ENCODE measurements at regions of chr9 and their contacts with region 1.

Region 1: GRCh38 chr9:136944519-136945279 is at the starts of genes C8G and FBXW5:
- DNase-seq: peak; percentile 72
- ATAC-seq: peak; percentile 78
- H3K4me3 ChIP-seq: peak within 1 kb of the TSS; percentile 98
- H3K27ac ChIP-seq: peak within 1 kb of the TSS; percentile 91
- H3K4me1 ChIP-seq: peaks cover 4% of the 10 kb centered on the region
- H3K27me3 ChIP-seq: no peaks in the 10 kb centered on the region
- CTCF ChIP-seq: peak; percentile 95 to 98 (median 98); a peak in 5 of 6 replicates
- EP300 ChIP-seq: 0 out of 4 replicates have a peak, but pooled peaks of 1 of the 2 experiments have one; percentile 35
- POLR2A ChIP-seq: no peak
- RAD21 ChIP-seq: peak; percentile 35; the same call in 1 of the 2 replicates
- polyA plus RNA-seq, gene C8G: not detected
- polyA plus RNA-seq, gene FBXW5: 0.21 to 1.4 TPM

Region 2: DNA sequence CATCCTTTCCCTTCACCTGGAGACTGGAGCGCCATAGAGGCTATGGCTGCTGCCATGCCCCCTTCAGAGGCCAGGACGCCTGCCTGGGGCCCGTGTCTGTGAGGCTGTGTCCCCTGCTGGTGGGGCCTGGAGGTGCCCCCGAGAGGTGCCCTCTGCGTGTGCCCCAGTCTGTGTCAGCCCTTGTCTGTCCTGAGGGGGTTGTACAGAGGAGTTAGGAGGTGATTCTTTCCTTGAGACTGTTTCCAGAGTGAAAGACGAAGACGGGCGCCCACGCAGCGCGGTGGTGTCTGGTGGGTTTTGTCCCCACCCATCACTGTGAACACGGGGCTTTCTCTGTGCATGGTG is 33.8 kb before region 1 on chr9:
- CTCF ChIA-PET with region 1: no interaction called
- POLR2A ChIA-PET with region 1: no interaction called
- RAD21 ChIA-PET with region 1: no interaction called
- SMC1A ChIA-PET with region 1: no interaction called
- in situ Hi-C with region 1: no loop called
- intact Hi-C with region 1: no loop called
- DNase-seq: no peak
- ATAC-seq: peak; percentile 68
- H3K4me3 ChIP-seq: no peak overlapping the region
- H3K27ac ChIP-seq: no peak overlapping the region
- H3K4me1 ChIP-seq: no peaks in the 10 kb centered on the region
- H3K27me3 ChIP-seq: no peaks in the 10 kb centered on the region
- CTCF ChIP-seq: peak in 2 of 3 experiments; percentile 6 to 14; a peak in 2 of 6 replicates
- EP300 ChIP-seq: no peak
- POLR2A ChIP-seq: no peak
- RAD21 ChIP-seq: no peak

Region 3: DNA sequence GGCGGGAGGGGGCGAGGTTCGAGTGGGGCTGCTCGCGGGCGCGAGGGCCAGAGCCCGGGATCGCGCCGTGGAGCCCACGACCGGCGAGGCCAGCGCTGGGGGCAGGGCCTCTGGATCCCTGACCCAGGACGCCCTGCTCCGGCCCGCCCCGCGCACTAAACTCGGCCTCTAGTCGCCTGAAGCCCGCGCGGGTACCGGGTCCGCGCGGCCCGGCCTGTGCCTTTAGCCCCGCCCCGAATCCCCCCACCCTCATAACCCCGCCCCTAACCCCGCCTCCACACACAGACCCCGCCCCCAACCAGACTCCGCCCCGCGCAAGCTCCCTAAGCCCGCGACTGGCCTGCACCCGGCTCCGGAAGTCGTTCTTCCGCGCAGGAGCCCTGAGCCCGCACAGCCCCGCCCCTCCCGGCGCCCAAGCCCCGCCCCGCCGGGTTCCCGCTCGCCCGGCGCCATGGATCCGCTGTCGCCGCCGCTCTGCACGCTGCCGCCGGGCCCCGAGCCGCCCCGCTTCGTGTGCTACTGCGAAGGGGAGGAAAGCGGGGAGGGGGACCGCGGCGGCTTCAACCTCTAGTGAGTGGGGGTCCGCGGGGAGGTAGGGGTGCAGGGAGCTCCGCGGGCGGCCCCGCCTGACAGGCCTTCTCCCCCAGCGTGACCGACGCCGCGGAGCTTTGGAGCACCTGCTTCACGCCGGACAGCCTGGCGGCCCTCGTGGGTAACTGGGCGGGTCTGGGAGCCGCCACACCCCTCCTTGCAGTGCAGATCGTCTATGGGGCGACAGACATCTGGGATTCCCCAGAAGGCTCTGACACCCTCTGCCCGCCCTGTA is 47.5 kb after region 1 on chr9 and contains the start of gene PAXX:
- CTCF ChIA-PET with region 1: interaction called, 9 read pairs
- POLR2A ChIA-PET with region 1: interaction called, 3 read pairs
- RAD21 ChIA-PET with region 1: interaction called, 8 read pairs
- SMC1A ChIA-PET with region 1: interaction called, 4 read pairs
- in situ Hi-C with region 1: no loop called
- intact Hi-C with region 1: loop called (anchors 1 kb)
- DNase-seq: no peak
- ATAC-seq: peak; percentile 94
- H3K4me3 ChIP-seq: peak within 1 kb of the TSS; percentile 73
- H3K27ac ChIP-seq: peak within 1 kb of the TSS; percentile 63
- H3K4me1 ChIP-seq: peaks cover 20% of the 10 kb centered on the region
- H3K27me3 ChIP-seq: peaks cover 2 to 4% of the 10 kb centered on the region in 2 experiments; a peak in 3 of 4 replicates
- CTCF ChIP-seq: no peak
- EP300 ChIP-seq: no peak
- POLR2A ChIP-seq: peak; percentile 67
- RAD21 ChIP-seq: no peak
- polyA plus RNA-seq, gene PAXX: 0.18 to 2.9 TPM

Region 4: GRCh38 chr9:137079401-137079787 is 134.7 kb after region 1 on chr9:
- CTCF ChIA-PET with region 1: no interaction called
- POLR2A ChIA-PET with region 1: no interaction called
- RAD21 ChIA-PET with region 1: no interaction called
- SMC1A ChIA-PET with region 1: no interaction called
- in situ Hi-C with region 1: no loop called
- intact Hi-C with region 1: no loop called
- DNase-seq: no peak
- ATAC-seq: no peak
- H3K4me3 ChIP-seq: no peak overlapping the region
- H3K27ac ChIP-seq: no peak overlapping the region
- H3K4me1 ChIP-seq: peaks cover 36% of the 10 kb centered on the region
- H3K27me3 ChIP-seq: no peaks in the 10 kb centered on the region
- CTCF ChIP-seq: no peak
- EP300 ChIP-seq: no peak
- POLR2A ChIP-seq: no peak
- RAD21 ChIP-seq: no peak

Measured in GM12878 (cell line).